Ascending aorta (tissue), 2 donors: ENCODE measurements at regions of chr19 and their contacts with region 1.

Region 1: GRCh38 chr19:4968462-4969291 is at the start of gene KDM4B:
- DNase-seq: peak; percentile 99 to 100
- H3K4me3 ChIP-seq: peak within 1 kb of the TSS; percentile 62 to 90
- H3K27ac ChIP-seq: peak within 1 kb of the TSS; percentile 24 to 40
- H3K4me1 ChIP-seq: peaks cover 9 to 18% of the 10 kb centered on the region in 2 donors
- H3K27me3 ChIP-seq: no peaks in the 10 kb centered on the region
- CTCF ChIP-seq: no peak
- total RNA-seq, gene KDM4B: 46.0 TPM

Region 2: GRCh38 chr19:3868770-3869456 is 1099.8 kb before region 1 on chr19 and contains the start of gene ZFR2:
- intact Hi-C with region 1: no loop called
- DNase-seq: no peak
- H3K4me3 ChIP-seq: peak within 1 kb of the TSS in 1 of 2 donors; percentile 7
- H3K27ac ChIP-seq: no peak within 1 kb of the TSS
- H3K4me1 ChIP-seq: no peaks in the 10 kb centered on the region
- H3K27me3 ChIP-seq: peaks cover 18% of the 10 kb centered on the region
- CTCF ChIP-seq: no peak
- total RNA-seq, gene ZFR2: not detected

Region 3: DNA sequence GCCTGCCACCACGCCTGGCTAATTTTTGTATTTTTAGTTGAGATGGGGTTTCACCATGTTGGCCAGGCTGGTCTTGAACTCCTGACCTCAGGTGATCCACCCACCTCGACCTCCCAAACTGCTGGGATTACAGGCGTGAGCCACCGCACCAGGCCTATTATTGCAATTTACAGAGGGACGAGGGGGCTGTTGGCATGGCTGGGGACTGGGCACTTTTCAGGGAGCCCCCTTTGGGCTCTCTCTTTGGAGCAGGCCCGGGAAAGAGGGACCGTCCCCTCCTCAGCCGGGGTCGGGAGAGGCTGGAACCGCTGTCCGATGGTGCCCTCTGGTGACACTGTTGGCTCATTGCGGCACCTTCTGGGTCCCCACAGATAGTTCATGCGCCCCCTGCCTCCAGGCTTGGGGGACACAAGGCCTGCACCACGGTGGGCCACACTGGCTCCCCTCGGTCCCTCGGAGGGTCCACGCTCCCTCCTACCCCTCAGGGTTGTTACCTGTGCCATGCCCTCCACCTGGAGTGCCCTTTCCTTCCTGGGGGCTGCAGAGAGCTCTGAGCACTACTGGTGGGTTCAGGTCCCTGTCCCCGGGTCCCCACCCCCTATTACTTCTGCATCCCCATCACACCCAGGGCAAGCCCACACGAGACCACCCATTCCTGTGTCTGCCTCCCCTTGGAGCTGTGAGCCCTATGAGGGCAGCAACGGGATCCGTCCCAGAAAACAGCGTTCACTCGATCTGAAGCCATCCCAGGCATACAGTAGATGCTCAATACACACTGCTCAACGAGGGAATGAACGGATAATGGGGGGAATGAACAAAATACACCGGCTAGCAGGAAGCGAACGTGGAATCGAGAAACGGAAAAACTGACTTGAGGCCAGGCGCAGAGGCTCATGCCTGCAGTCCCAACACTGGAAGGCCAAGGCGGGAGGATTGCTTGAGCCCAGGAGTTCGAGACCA is 164.7 kb before region 1 on chr19:
- intact Hi-C with region 1: no loop called
- DNase-seq: no peak
- H3K4me3 ChIP-seq: no peak overlapping the region
- H3K27ac ChIP-seq: no peak overlapping the region
- H3K4me1 ChIP-seq: no peaks in the 10 kb centered on the region
- H3K27me3 ChIP-seq: no peaks in the 10 kb centered on the region
- CTCF ChIP-seq: peak; percentile 48 to 66 (median 56)

Region 4: DNA sequence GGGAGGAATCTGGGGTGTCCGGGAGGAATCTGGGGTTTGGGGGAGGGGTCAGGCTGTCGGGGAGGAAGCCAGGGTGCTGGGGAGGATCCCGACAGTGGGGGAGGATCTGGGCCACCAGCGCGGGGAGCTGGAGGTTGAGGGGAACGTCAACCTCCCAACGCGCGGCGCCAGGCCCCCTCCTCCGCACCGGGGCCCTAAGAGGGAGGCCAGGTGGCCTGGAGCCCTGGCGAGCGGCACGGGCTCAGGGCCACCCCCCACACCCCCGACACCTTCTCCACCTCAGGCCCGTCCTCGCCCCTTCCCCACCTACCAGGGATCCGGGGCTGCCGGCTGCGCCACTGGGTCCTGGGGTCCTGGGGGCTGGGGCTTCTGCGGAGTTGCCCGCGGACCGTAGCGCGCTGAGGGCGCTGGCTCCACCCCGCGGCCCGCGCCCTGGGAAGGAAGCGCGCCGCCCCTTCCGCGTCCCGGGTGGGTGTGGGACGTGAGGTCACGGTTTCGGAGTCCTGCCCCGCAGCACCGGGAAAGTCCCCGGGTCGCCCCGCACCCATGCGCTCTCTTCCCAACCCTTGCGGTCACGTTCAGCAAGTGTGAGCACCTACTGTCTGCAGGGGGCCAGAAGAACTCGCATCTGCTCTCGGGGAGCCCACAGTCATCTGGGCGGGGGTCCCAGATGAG is 137.2 kb before region 1 on chr19 and contains the start of gene TICAM1:
- intact Hi-C with region 1: no loop called
- DNase-seq: peak; percentile 25 to 83
- H3K4me3 ChIP-seq: peak within 1 kb of the TSS; percentile 94 to 98
- H3K27ac ChIP-seq: peak within 1 kb of the TSS; percentile 96 to 99
- H3K4me1 ChIP-seq: peaks cover 5 to 12% of the 10 kb centered on the region in 2 donors
- H3K27me3 ChIP-seq: no peaks in the 10 kb centered on the region
- CTCF ChIP-seq: peak in 2 of 3 experiments; percentile 14 to 15
- total RNA-seq, gene TICAM1: 20.3 TPM

Region 5: GRCh38 chr19:4867534-4868285 is 101.0 kb before region 1 on chr19 and contains the start of gene PLIN3:
- intact Hi-C with region 1: loop called (anchors 2 kb)
- DNase-seq: peak; percentile 89 to 98
- H3K4me3 ChIP-seq: peak within 1 kb of the TSS; percentile 71 to 83
- H3K27ac ChIP-seq: peak within 1 kb of the TSS; percentile 68 to 81
- H3K4me1 ChIP-seq: peaks cover 5 to 17% of the 10 kb centered on the region in 2 donors
- H3K27me3 ChIP-seq: no peaks in the 10 kb centered on the region
- CTCF ChIP-seq: no peak
- total RNA-seq, gene PLIN3: 84.3 TPM

Region 6: GRCh38 chr19:4909897-4910593 is 58.6 kb before region 1 on chr19:
- intact Hi-C with region 1: loop called (anchors 1 kb)
- DNase-seq: peak; percentile 71 to 94
- H3K4me3 ChIP-seq: peak overlapping the region; percentile 76 to 77
- H3K27ac ChIP-seq: no peak overlapping the region
- H3K4me1 ChIP-seq: peaks cover 18 to 22% of the 10 kb centered on the region in 2 donors
- H3K27me3 ChIP-seq: no peaks in the 10 kb centered on the region
- CTCF ChIP-seq: no peak

Region 7: DNA sequence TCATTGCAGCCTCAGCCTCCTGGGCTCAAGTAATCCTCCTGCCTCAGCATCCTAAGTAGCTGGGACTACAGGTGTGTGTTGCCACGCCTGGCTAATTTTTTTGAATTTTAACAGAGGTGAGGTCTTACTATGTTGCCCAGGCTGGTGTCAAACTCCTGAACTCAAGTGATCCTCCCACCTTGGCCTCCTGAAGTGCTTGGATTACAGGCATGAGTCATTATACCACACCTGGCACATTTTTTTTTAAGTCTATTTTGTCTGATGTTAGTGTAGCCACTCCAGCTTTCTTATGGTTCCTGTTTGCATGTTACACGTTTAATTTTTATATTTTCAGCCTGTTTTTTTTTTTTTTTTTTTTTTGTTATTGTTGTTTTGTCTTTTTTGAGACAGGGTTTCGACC is 25.0 kb after region 1 on chr19:
- intact Hi-C with region 1: no loop called
- DNase-seq: no peak
- H3K4me3 ChIP-seq: no peak overlapping the region
- H3K27ac ChIP-seq: no peak overlapping the region
- H3K4me1 ChIP-seq: peaks cover 0 to 4% of the 10 kb centered on the region in 2 donors
- H3K27me3 ChIP-seq: no peaks in the 10 kb centered on the region
- CTCF ChIP-seq: no peak